Motor neuron (in vitro differentiated cells): ENCODE measurements at regions of chr12 and their contacts with region 1.

Region 1: DNA sequence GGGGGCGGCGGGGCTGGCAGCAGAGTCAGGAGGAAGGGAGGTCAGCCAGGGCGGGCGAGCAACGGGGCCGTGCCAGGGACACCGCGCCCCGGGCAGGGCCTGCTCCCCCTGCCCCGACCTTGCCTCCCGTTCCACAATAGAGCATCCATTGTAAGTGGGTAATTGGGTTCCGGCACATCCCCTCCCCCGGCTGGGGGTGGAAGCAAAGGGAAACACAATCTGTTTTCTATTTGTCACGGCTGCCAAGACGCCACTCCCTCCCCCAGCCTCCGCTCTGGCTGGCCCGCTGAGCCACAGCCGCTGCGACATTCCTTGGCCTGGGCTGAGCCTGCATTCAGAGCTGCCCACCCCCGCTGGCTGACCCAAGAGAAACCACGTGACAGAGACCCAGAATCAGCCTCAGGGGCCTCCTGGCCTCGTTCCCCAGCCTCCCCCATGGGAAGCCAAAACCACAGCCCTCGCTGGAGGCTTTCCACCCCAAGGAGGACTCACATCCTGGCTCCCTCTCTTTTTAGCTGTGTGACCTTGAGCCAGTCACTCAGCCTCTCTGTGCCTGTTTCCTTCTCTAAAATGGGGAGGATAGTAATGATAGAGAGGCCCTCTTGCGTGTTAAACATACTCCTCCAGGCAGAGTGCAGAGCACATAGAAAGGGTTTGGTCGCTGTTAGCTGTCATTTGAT is 117.6 kb downstream of the SCARB1 start:
- ATAC-seq: peak; percentile 88 to 97 (median 92)
- H3K4me3 ChIP-seq: peak overlapping the region in 1 of 5 donors; percentile 3
- H3K27ac ChIP-seq: peak overlapping the region; percentile 63 to 75
- H3K4me1 ChIP-seq: peaks cover 22 to 26% of the 10 kb centered on the region in 2 donors

Region 2: GRCh38 chr12:124545508-124546418 is 200.3 kb before region 1 on chr12:
- in situ Hi-C with region 1: loop called in 8 of 9 experiments (anchors 25 kb)
- ATAC-seq: no peak
- H3K4me3 ChIP-seq: no peak overlapping the region
- H3K27ac ChIP-seq: no peak overlapping the region
- H3K4me1 ChIP-seq: peaks cover 61 to 66% of the 10 kb centered on the region in 2 donors

Region 3: DNA sequence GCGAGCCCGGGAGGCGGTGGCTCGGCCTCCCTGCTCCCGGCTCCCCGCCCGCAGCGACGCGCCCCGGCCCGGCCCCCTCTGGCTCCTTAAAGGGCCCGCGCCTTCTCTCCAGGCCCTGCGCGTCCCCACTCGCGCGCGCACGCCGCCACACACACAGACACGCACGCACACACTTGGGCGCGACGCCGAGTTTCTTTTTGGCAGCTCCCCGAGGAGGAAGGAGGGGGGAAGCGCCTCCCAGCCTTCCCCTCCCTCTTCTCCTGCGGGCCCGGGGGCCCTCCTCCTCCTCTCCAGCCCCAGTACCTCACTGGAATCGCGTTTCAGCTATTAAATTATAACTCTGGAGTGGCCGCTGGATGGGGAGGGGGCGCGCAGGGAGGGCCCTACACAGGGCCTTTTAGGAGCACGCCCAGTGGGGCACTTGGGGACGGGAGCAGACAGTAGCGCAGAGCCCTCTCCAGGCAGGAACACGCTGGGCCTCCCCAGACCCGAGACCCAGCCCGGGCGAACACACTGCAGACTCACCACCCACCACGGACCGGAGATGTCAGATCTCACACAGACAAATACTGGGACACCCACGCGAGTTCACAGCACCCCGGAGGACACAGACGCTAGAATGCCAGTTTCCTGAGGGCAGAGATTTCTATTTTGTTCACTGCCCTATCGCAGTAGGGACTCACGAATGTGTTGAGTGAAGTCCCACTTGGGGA is 178.2 kb before region 1 on chr12:
- in situ Hi-C with region 1: loop called in 7 of 9 experiments (anchors 25 kb)
- ATAC-seq: peak; percentile 58 to 67 (median 64)
- H3K4me3 ChIP-seq: peak overlapping the region; percentile 45 to 95 (median 68)
- H3K27ac ChIP-seq: peak overlapping the region; percentile 81 to 92
- H3K4me1 ChIP-seq: peaks cover 23 to 32% of the 10 kb centered on the region in 2 donors